Activated T-helper 1 cell treated with anti-CD3 and anti-CD28 coated beads, Interleukin-12 subunit alpha, Interleukin-12 subunit beta, Interleukin-2, Interleukin-4 antibody, amounts not matched to agents 30 ng/mL and 10 ng/mL and 1 ng/mL, durations not matched to agents 14 hours and 24 hours and 36 hours (primary cell): ENCODE measurements at regions of chr1 and their contacts with region 1.

Region 1: GRCh38 chr1:173409613-173410012 is 67.5 kb upstream of the PRDX6 start:
- DNase-seq: no peak
- H3K4me3 Mint-ChIP-seq: no peak overlapping the region
- H3K27ac Mint-ChIP-seq: no peak overlapping the region
- H3K4me1 Mint-ChIP-seq: peaks cover 19% of the 10 kb centered on the region
- H3K27me3 Mint-ChIP-seq: peaks cover 4% of the 10 kb centered on the region

Region 2: GRCh38 chr1:172826096-172826743 is 583.4 kb before region 1 on chr1:
- intact Hi-C with region 1: loop called (anchors 10 kb)
- DNase-seq: no peak
- H3K4me3 Mint-ChIP-seq: no peak overlapping the region
- H3K27ac Mint-ChIP-seq: no peak overlapping the region
- H3K4me1 Mint-ChIP-seq: no peaks in the 10 kb centered on the region
- H3K27me3 Mint-ChIP-seq: peaks cover 14% of the 10 kb centered on the region

Region 3: DNA sequence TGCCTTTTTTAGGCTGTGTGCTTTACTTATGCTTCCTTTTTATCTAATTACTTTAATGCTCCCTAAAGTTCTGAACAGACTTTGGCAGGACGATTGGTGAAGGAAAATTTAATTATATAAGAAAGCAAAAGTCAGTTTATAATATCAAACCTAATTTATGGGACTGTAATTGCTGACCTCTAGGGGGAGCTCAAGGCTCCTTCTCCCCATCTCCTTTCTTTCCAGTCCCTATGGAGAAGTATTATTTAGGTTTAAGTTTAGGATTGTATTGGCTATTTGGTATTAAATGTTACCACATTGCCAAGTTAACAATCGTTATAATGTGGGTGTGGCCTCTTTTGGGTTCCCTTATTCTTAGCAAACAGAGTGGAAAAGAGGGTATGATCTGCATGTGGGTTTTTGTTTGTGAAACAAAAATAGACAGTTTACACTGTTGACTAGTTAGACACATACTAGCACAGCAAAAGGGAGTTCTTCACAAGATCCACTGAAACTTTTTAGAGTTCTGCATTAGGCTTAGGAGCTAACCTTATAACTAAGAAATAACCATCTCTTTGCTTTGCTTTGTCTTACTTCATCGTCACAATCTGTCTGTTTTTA is 154.3 kb before region 1 on chr1:
- intact Hi-C with region 1: loop called (anchors 5 kb)
- DNase-seq: no peak
- H3K4me3 Mint-ChIP-seq: no peak overlapping the region
- H3K27ac Mint-ChIP-seq: no peak overlapping the region
- H3K4me1 Mint-ChIP-seq: no peaks in the 10 kb centered on the region
- H3K27me3 Mint-ChIP-seq: no peaks in the 10 kb centered on the region

Region 4: GRCh38 chr1:173392895-173393658 is 16.5 kb before region 1 on chr1:
- intact Hi-C with region 1: no loop called
- DNase-seq: no peak
- H3K4me3 Mint-ChIP-seq: no peak overlapping the region
- H3K27ac Mint-ChIP-seq: no peak overlapping the region
- H3K4me1 Mint-ChIP-seq: no peaks in the 10 kb centered on the region
- H3K27me3 Mint-ChIP-seq: no peaks in the 10 kb centered on the region